Activated naive CD4-positive, alpha-beta T cell treated with anti-CD3 and anti-CD28 coated beads for 36 hours (primary cell): ENCODE measurements at regions of chr11 and their contacts with region 1.

Region 1: DNA sequence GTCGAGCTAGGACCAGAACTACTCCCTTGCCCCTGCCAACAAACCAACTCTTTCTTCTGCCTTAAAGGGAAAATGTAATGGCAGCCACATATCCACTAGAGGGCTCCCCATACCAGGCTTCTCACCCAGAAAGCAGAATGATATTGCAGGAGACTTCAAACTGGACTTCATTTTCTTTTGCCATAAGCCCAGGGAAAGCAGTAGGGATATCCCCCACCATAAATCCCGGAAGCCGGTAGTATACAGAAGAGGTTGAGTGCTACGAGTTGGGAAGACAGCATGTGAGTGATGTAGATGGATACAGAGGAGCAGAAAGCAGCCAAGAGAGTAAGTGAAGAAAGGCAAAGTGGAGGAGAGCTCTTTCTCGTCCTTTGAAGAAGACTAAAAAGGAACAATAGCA is 12.1 kb downstream of the PLAAT5 start:
- DNase-seq: peak; percentile 65
- H3K4me3 Mint-ChIP-seq: no peak overlapping the region
- H3K27ac Mint-ChIP-seq: no peak overlapping the region
- H3K4me1 Mint-ChIP-seq: no peaks in the 10 kb centered on the region
- H3K27me3 Mint-ChIP-seq: no peaks in the 10 kb centered on the region

Region 2: GRCh38 chr11:63032457-63032856 is 446.4 kb before region 1 on chr11:
- CTCF ChIA-PET with region 1: no interaction called
- intact Hi-C with region 1: loop called (anchors 2 kb)
- DNase-seq: no peak
- H3K4me3 Mint-ChIP-seq: no peak overlapping the region
- H3K27ac Mint-ChIP-seq: no peak overlapping the region
- H3K4me1 Mint-ChIP-seq: no peaks in the 10 kb centered on the region
- H3K27me3 Mint-ChIP-seq: peaks cover 10% of the 10 kb centered on the region

Region 3: DNA sequence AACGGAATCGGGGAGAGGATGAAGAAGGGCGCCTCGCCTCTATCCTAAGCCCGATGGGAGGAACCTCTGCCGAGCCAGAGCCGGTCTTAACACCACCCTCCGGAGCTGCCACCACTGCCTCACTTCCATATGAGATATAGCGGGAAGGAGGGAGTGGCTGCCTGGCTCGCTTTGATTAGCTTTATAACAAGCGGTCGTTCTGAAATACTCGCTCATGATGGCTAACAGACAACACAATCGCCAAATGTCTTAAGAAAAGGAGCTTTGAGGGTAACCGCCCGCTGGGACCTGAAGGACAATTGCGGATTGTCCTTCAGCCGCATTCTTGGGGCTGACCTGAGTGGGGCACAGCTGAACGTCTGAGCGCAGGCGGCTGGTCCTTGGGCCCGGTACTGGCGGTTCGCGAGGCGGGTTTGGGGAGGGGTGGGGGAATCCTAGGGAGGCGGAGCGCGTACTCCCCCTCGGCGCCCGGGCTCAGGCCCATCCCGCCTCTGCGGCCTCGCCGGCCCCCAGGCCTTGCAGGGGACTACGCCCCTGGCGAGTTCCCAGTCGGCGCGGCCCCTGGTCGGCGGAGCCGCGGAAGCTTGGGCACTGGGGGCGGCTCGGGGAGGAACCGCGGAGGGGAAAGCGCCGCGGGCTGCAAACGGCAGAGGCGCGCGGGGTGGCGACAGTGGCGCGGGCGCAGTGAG is 11.8 kb after region 1 on chr11 and contains the start of gene PLAAT5:
- CTCF ChIA-PET with region 1: interaction called, 11 read pairs
- intact Hi-C with region 1: no loop called
- DNase-seq: peak; percentile 28
- H3K4me3 Mint-ChIP-seq: peak within 1 kb of the TSS; percentile 76
- H3K27ac Mint-ChIP-seq: no peak within 1 kb of the TSS
- H3K4me1 Mint-ChIP-seq: peaks cover 14% of the 10 kb centered on the region
- H3K27me3 Mint-ChIP-seq: peaks cover 13% of the 10 kb centered on the region
- total RNA-seq, gene PLAAT5: not detected

Region 4: DNA sequence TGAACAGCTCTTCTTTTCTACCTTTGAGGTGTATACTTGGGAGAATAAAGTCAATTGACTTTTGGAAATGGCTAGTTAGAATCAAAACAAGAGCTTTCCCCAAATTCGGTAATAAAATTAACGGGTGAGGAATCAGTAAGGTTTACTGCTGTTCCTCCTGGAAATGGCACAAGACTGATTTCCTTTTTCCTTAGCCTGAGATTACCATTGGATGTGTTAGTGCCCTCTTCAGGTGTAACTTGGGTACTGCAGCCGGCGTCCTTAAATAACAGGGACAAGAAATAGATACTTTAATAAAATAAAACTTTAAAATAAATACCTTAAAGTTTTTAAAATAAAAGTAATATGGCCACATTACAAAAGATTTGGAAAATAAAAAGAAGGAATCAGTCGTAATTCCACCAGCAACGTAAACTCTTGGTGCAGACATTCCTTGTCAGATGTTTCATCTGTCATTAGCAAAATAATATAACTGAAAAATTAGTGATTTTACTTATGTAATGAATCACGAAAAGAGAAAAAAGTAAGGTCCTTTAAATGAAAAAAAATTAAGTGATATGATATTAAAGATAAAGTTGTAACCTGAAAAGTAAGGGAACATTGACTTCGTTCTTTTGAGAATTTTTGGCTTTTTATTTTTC is 259.9 kb after region 1 on chr11:
- CTCF ChIA-PET with region 1: interaction called, 5 read pairs
- intact Hi-C with region 1: loop called (anchors 1 kb)
- DNase-seq: peak; percentile 86
- H3K4me3 Mint-ChIP-seq: no peak overlapping the region
- H3K27ac Mint-ChIP-seq: no peak overlapping the region
- H3K4me1 Mint-ChIP-seq: peaks cover 2% of the 10 kb centered on the region
- H3K27me3 Mint-ChIP-seq: no peaks in the 10 kb centered on the region